Ovary (tissue), 10 donors: ENCODE measurements at regions of chr4 and their contacts with region 1.

Region 1: GRCh38 chr4:163949976-163950601 is 455.6 kb downstream of the TMA16 start:
- DNase-seq: no peak
- H3K4me3 ChIP-seq: no peak overlapping the region
- H3K27ac ChIP-seq: no peak overlapping the region
- H3K4me1 ChIP-seq: no peaks in the 10 kb centered on the region
- H3K27me3 ChIP-seq: no peaks in the 10 kb centered on the region
- CTCF ChIP-seq: no peak
- EP300 ChIP-seq: no peak
- POLR2A ChIP-seq: no peak

Region 2: GRCh38 chr4:162565730-162566129 is 1384.4 kb before region 1 on chr4:
- intact Hi-C with region 1: loop called in 1 of 4 experiments (anchors 2 kb)
- DNase-seq: no peak
- H3K4me3 ChIP-seq: no peak overlapping the region
- H3K27ac ChIP-seq: no peak overlapping the region
- H3K4me1 ChIP-seq: no peaks in the 10 kb centered on the region
- H3K27me3 ChIP-seq: peaks cover 4% of the 10 kb centered on the region
- CTCF ChIP-seq: no peak
- EP300 ChIP-seq: no peak
- POLR2A ChIP-seq: no peak